HEK293 (cell line): ENCODE measurements at regions of chr2 and their contacts with region 1.

Region 1: DNA sequence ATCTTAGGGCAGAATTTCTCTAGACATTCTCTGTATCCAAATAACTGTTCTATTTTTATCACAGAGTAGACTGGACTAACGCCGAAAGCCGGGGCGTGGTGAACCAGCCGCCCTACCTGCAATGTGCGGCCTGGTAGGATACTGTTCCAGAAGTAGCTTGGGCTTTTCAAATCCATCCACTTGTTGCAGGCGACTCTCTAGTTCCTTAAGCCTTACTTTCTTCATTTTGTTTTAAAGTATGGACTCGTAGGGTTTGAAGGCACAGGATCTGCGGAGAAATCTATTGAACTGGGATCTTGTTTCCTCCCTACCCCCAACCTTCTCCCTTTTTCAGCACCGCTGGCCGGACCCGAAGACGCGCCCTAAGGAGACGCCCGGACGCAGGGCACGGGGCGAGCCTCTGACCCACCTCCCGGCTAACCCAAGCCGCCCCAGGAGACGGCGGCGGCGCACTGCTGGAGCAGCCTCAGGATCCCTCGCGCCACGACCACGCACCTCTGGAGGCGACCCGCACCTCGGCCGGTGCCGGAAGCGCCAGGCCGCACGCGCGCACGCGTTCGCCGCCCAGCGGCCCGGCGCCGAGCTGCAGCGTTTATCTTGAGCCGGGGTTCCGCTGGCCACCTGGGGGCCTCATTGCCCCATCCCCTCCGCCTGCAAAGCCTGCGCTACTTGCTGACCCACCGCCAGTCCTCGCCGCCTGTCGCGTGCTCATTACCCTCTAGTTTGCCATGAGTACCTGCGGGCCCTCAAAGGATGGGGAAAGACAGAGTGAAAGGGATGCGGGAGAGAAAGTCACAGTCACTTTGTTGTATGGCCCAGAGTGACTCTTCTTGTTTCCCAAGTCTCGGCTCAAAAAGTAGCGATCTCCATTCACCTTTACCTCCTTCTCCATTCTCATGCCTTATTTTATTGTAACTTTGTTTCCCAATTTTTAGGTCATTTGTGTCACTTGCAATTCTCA is at the start of gene METTL5:
- H3K4me3 ChIP-seq: peak within 1 kb of the TSS; percentile 82
- H3K27ac ChIP-seq: peak within 1 kb of the TSS; percentile 70
- H3K4me1 ChIP-seq: no peaks in the 10 kb centered on the region; the same call in 1 of the 2 replicates
- CTCF ChIP-seq: peak; percentile 96

Region 2: GRCh38 chr2:169438460-169439072 is 386.1 kb before region 1 on chr2:
- CTCF ChIA-PET with region 1: no interaction called
- POLR2A ChIA-PET with region 1: no interaction called
- H3K4me3 ChIP-seq: no peak overlapping the region
- H3K27ac ChIP-seq: no peak overlapping the region
- H3K4me1 ChIP-seq: 0 out of 2 replicates have a peak, but pooled peaks cover 2% of the 10 kb centered on the region
- CTCF ChIP-seq: no peak

Region 3: DNA sequence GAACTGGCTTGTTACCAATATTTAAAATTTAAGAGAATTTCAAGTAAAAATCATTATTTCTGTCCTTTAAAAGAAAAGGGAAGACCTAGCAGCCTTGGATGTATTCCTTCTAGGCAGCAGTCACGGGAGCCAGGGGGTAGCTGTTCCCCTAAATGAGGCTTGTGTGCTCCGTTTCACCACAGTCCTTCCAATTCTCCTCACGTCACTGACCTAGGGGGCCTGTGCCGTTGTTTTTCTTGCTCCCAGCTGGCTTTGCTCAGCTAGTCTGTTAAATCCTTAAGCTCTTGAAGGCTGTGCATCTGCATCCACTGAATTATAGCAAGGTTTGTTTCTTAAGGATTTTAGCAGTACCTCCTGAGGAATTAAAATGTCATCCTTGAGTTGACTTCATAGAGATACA is 81.1 kb before region 1 on chr2:
- CTCF ChIA-PET with region 1: no interaction called
- POLR2A ChIA-PET with region 1: no interaction called
- H3K4me3 ChIP-seq: no peak overlapping the region
- H3K27ac ChIP-seq: no peak overlapping the region
- H3K4me1 ChIP-seq: no peaks in the 10 kb centered on the region; the same call in 1 of the 2 replicates
- CTCF ChIP-seq: no peak

Region 4: GRCh38 chr2:169798718-169799592 is 25.7 kb before region 1 on chr2 and contains the start of gene SSB:
- CTCF ChIA-PET with region 1: interaction called, 3 read pairs
- POLR2A ChIA-PET with region 1: interaction called, 12 read pairs
- H3K4me3 ChIP-seq: peak within 1 kb of the TSS; percentile 93
- H3K27ac ChIP-seq: peak within 1 kb of the TSS; percentile 78
- H3K4me1 ChIP-seq: no peaks in the 10 kb centered on the region
- CTCF ChIP-seq: no peak

Region 5: GRCh38 chr2:169877398-169877797 is 52.7 kb after region 1 on chr2:
- CTCF ChIA-PET with region 1: interaction called, 10 read pairs
- POLR2A ChIA-PET with region 1: interaction called, 10 read pairs
- H3K4me3 ChIP-seq: no peak overlapping the region
- H3K27ac ChIP-seq: no peak overlapping the region
- H3K4me1 ChIP-seq: no peaks in the 10 kb centered on the region
- CTCF ChIP-seq: no peak

Region 6: GRCh38 chr2:169933124-169933711 is 108.6 kb after region 1 on chr2:
- CTCF ChIA-PET with region 1: interaction called, 10 read pairs
- POLR2A ChIA-PET with region 1: interaction called, 3 read pairs
- H3K4me3 ChIP-seq: no peak overlapping the region
- H3K27ac ChIP-seq: no peak overlapping the region
- H3K4me1 ChIP-seq: no peaks in the 10 kb centered on the region
- CTCF ChIP-seq: peak; percentile 27; the same call in 1 of the 2 replicates

Region 7: DNA sequence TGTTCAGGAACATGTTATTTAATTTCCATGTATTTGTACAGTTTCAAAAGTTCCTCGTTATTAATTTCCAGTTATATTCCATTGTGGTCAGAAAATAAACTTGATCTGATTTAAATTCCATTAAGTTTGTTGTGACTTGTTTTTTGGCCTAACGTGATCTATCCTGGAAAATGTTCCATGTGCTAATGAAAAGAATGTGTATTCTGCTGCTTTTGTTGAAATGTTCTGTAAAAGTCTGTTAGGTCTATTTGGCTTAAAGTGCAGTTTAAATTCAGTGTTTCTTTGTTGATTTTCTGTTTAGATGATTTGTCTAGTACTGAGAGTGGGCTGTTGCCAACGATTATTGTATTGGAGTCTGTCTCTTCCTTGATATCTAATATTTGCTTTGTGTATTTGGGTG is 150.6 kb after region 1 on chr2:
- CTCF ChIA-PET with region 1: no interaction called
- POLR2A ChIA-PET with region 1: no interaction called
- H3K4me3 ChIP-seq: no peak overlapping the region
- H3K27ac ChIP-seq: no peak overlapping the region
- H3K4me1 ChIP-seq: no peaks in the 10 kb centered on the region
- CTCF ChIP-seq: no peak